ENCODE measurements at regions of chr5 and their contacts with region 1.

Region 1: GRCh38 chr5:144712090-144712489 is 541.4 kb downstream of the KCTD16 start:
- DNase-seq: peak; percentile 50
- H3K4me3 ChIP-seq: no peak overlapping the region
- H3K27ac ChIP-seq: no peak overlapping the region
- H3K4me1 ChIP-seq: peaks cover 29% of the 10 kb centered on the region
- CTCF ChIP-seq: no peak

Region 2: GRCh38 chr5:144864118-144864517 is 152.0 kb after region 1 on chr5:
- CTCF ChIA-PET with region 1: no interaction called
- POLR2A ChIA-PET with region 1: interaction called, 3 read pairs
- intact Hi-C with region 1: loop called (anchors 2 kb)
- DNase-seq: peak; percentile 80
- H3K4me3 ChIP-seq: peak overlapping the region; percentile 26
- H3K27ac ChIP-seq: peak overlapping the region; percentile 84
- H3K4me1 ChIP-seq: peaks cover 54% of the 10 kb centered on the region
- CTCF ChIP-seq: no peak

Region 3: GRCh38 chr5:144876990-144877389 is 164.9 kb after region 1 on chr5:
- CTCF ChIA-PET with region 1: no interaction called
- POLR2A ChIA-PET with region 1: no interaction called
- intact Hi-C with region 1: loop called (anchors 5 kb)
- DNase-seq: no peak
- H3K4me3 ChIP-seq: no peak overlapping the region
- H3K27ac ChIP-seq: no peak overlapping the region
- H3K4me1 ChIP-seq: peaks cover 6% of the 10 kb centered on the region
- CTCF ChIP-seq: no peak